Activated CD8-positive, alpha-beta T cell treated with anti-CD3 and anti-CD28 coated beads for 36 hours (primary cell): ENCODE measurements at regions of chr17 and their contacts with region 1.

Region 1: GRCh38 chr17:36948717-36949460 is at the start of gene AATF:
- DNase-seq: peak; percentile 96
- ATAC-seq: peak; percentile 98
- H3K4me3 Mint-ChIP-seq: peak within 1 kb of the TSS; percentile 83
- H3K27ac Mint-ChIP-seq: peak within 1 kb of the TSS; percentile 96
- H3K4me1 Mint-ChIP-seq: peaks cover 48% of the 10 kb centered on the region
- H3K27me3 Mint-ChIP-seq: peaks cover 33% of the 10 kb centered on the region
- CTCF ChIP-seq: no peak
- total RNA-seq, gene AATF: 81.8 to 90.3 TPM

Region 2: GRCh38 chr17:36899250-36900159 is 49.4 kb before region 1 on chr17:
- CTCF ChIA-PET with region 1: no interaction called
- POLR2A ChIA-PET with region 1: no interaction called
- intact Hi-C with region 1: loop called (anchors 10 kb)
- DNase-seq: no peak
- ATAC-seq: no peak
- H3K4me3 Mint-ChIP-seq: no peak overlapping the region
- H3K27ac Mint-ChIP-seq: no peak overlapping the region
- H3K4me1 Mint-ChIP-seq: no peaks in the 10 kb centered on the region
- H3K27me3 Mint-ChIP-seq: peaks cover 7% of the 10 kb centered on the region
- CTCF ChIP-seq: no peak

Region 3: GRCh38 chr17:36937966-36938565 is 10.8 kb before region 1 on chr17:
- CTCF ChIA-PET with region 1: no interaction called
- POLR2A ChIA-PET with region 1: interaction called, 19 read pairs
- intact Hi-C with region 1: no loop called
- DNase-seq: peak; percentile 59
- ATAC-seq: peak; percentile 19
- H3K4me3 Mint-ChIP-seq: peak overlapping the region; percentile 66
- H3K27ac Mint-ChIP-seq: no peak overlapping the region
- H3K4me1 Mint-ChIP-seq: peaks cover 61% of the 10 kb centered on the region
- H3K27me3 Mint-ChIP-seq: peaks cover 79% of the 10 kb centered on the region
- CTCF ChIP-seq: no peak

Region 4: GRCh38 chr17:36989173-36989572 is 40.3 kb after region 1 on chr17:
- CTCF ChIA-PET with region 1: no interaction called
- POLR2A ChIA-PET with region 1: no interaction called
- intact Hi-C with region 1: no loop called
- DNase-seq: no peak
- ATAC-seq: no peak
- H3K4me3 Mint-ChIP-seq: no peak overlapping the region
- H3K27ac Mint-ChIP-seq: no peak overlapping the region
- H3K4me1 Mint-ChIP-seq: peaks cover 9% of the 10 kb centered on the region
- H3K27me3 Mint-ChIP-seq: no peaks in the 10 kb centered on the region
- CTCF ChIP-seq: no peak